Activated CD8-positive, alpha-beta T cell treated with anti-CD3 and anti-CD28 coated beads, Interleukin-2, amount 10 ng/mL, durations not matched to agents 7 days and 5 days (primary cell): ENCODE measurements at regions of chr13 and their contacts with region 1.

Region 1: DNA sequence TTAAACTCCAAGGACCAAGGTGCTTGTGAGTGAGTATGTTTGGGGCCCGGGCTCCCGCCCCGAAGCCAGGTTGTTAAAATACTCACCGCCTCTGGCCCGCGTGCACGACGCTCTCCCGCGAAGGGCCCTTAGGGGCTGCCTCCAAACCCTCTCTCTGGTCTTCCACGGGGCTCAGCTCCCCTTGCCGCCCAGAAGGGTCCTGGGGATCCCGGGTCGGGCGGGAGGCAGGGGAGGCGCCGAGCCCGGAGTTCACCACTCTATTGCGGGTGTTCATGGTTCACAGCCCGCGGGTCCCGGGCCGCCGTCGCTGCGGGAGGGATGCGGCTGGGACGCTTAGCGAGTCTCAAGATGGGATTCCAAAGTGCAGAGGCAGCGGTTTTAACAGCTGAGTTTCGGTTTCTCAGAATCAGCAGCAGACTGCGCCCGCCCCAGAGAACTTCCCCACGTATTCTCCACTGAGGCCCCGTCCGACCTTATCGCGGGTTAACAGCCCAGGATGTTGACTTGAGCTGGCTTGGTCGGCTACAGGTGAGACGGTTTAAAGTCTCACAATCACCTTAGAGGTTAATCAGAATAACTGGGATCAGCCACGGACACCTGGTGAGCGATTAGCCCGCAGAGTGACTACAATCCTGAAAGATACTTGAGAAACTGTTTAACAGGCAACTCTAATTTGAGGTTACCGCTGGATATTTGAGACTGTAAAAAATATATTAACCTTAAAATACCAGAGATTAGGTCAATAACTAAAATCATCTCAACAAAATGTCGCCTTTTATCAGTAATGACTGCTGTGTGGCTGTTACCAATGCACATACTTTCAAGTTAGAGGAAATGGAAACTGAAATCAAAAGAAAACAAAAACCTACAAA is at the start of gene EPSTI1:
- DNase-seq: peak; percentile 86
- ATAC-seq: peak; percentile 79
- H3K4me3 Mint-ChIP-seq: peak within 1 kb of the TSS; percentile 89
- H3K27ac Mint-ChIP-seq: peak within 1 kb of the TSS; percentile 99
- H3K4me1 Mint-ChIP-seq: peaks cover 58% of the 10 kb centered on the region
- H3K27me3 Mint-ChIP-seq: no peaks in the 10 kb centered on the region
- total RNA-seq, gene EPSTI1: 59.0 to 68.1 TPM

Region 2: GRCh38 chr13:42969558-42970172 is 22.5 kb before region 1 on chr13:
- CTCF ChIA-PET with region 1: interaction called, 33 read pairs
- POLR2A ChIA-PET with region 1: interaction called, 7 read pairs
- DNase-seq: peak; percentile 87
- ATAC-seq: peak; percentile 89
- H3K4me3 Mint-ChIP-seq: no peak overlapping the region
- H3K27ac Mint-ChIP-seq: peak overlapping the region; percentile 39
- H3K4me1 Mint-ChIP-seq: peaks cover 20% of the 10 kb centered on the region
- H3K27me3 Mint-ChIP-seq: no peaks in the 10 kb centered on the region

Region 3: DNA sequence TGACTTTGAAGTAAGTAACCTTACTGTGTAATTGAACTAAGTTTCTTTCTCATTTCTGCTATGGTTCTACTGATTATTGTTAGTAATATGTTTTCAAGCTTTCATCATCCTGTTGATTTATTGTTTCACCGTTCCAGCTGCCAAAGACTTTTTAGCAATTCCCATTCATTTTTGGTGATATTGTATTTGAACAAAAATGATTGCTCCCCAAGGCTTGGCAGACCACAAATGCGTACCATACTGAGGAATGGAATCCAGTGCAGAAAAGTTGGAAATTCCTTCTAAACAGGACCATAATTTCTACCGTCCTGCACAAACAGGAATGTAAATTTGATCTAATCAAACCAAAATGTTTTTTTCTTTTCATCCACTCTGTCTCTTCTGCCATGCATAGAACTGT is 10.8 kb before region 1 on chr13:
- CTCF ChIA-PET with region 1: interaction called, 6 read pairs
- POLR2A ChIA-PET with region 1: interaction called, 14 read pairs
- DNase-seq: no peak
- ATAC-seq: no peak
- H3K4me3 Mint-ChIP-seq: no peak overlapping the region
- H3K27ac Mint-ChIP-seq: no peak overlapping the region
- H3K4me1 Mint-ChIP-seq: peaks cover 30% of the 10 kb centered on the region
- H3K27me3 Mint-ChIP-seq: no peaks in the 10 kb centered on the region

Region 4: DNA sequence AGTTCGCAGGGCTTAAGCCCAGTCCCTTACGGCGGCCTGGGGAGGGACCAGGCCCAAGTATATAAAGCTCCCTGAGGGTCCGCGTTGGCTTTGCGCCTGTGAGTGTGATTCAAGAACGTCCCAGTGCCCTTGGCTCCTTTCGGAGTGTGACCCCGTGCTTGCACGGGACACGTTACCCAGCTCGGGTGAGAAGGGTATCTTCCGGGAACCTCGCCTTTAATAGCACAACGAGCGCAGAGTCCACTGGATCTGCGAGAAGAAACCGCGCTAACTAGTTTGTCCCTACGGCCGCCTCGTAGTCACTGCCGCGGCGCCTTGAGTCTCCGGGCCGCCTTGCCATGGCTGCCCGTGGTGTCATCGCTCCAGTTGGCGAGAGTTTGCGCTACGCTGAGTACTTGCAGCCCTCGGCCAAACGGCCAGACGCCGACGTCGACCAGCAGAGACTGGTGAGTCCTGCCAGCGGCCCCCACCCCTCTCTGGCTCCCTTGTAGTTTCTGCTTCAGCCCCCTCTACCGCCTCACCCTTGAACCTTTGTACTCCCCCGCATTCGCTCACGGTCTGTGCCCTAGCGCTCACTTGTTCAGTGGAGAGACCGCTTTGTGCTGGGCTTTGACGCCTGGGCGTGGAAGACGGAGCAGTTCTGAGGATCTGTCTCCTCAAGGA is 31.3 kb after region 1 on chr13 and contains the start of gene DNAJC15:
- CTCF ChIA-PET with region 1: interaction called, 5 read pairs
- POLR2A ChIA-PET with region 1: interaction called, 37 read pairs
- DNase-seq: peak; percentile 82
- ATAC-seq: peak; percentile 94
- H3K4me3 Mint-ChIP-seq: peak within 1 kb of the TSS; percentile 95
- H3K27ac Mint-ChIP-seq: peak within 1 kb of the TSS; percentile 95
- H3K4me1 Mint-ChIP-seq: peaks cover 15% of the 10 kb centered on the region
- H3K27me3 Mint-ChIP-seq: no peaks in the 10 kb centered on the region
- total RNA-seq, gene DNAJC15: 12.3 to 14.2 TPM

Region 5: DNA sequence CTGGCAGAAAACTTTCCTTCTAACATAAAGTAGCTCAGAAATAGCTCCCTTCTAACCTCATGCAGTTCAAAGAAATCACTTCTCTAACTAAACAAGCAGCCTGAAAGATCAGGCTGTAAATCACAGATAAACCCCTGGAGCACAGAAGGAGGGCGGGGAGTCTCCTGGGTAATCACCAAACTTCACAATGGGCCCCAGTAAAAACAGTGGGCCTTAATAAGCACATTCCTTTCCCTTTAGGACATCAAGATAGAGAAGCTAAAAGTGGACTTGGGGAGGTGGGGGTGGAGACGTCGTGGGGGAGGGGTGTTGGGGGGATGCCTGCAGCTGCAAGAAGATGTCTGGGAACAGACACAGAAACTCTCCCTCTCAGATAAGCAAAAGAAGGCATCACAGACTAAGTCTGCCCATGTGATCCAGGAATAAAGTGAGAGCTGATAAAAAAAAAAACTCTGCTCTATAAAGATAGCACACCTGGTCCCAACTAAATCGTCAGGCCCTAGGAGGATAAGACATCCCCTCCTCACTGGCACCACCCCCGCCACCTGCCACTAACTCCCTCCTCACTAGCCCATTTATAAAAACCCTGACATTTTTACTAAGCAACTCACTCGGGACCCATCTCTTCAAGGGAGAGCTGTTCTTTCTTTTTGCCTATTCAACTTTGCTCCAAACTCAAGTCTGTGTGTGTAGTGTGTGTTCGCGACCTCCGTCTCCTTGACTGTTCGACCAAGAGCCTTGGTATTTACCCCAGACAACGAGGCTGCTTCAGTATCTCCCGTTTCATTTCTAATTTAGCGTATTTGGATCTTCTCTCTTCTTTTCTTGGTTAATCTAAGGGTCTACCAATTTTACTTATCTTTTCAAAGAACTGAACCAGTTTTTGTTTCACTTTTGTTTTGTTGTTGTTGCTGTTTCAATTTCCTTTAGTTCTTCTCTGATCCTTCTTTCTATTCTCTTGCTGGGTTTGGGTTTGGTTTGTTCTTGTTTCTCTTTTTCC is 63.0 kb after region 1 on chr13:
- CTCF ChIA-PET with region 1: interaction called, 8 read pairs
- POLR2A ChIA-PET with region 1: interaction called, 27 read pairs
- DNase-seq: peak; percentile 37
- ATAC-seq: peak; percentile 59
- H3K4me3 Mint-ChIP-seq: no peak overlapping the region
- H3K27ac Mint-ChIP-seq: no peak overlapping the region
- H3K4me1 Mint-ChIP-seq: peaks cover 29% of the 10 kb centered on the region
- H3K27me3 Mint-ChIP-seq: no peaks in the 10 kb centered on the region